Activated CD4-positive, alpha-beta memory T cell treated with anti-CD3 and anti-CD28 coated beads, Interleukin-2, amount 10 ng/mL, durations not matched to agents 7 days and 5 days (primary cell): ENCODE measurements at regions of chr11 and their contacts with region 1.

Region 1: DNA sequence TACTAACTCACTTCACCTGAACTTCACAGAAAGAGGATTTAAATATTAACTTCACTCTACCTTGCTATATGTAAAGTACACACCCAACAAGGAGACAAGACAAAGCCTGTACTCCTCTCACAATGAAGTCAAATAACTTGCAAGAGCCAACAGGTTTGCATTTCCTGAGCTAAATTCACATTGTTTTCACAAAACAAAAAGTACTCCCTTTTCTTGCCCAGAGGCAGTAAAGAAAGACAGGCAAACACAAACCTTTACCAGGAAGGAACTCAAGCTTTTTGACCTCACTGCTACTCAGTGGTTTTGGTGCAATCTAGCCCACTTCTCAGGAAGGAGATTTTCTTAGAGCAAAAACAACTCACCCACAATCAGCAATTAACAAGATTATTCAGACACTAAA is 15.7 kb downstream of the USP28 start:
- DNase-seq: no peak
- H3K4me3 Mint-ChIP-seq: no peak overlapping the region
- H3K27ac Mint-ChIP-seq: peak overlapping the region; percentile 90
- H3K4me1 Mint-ChIP-seq: peaks cover 34% of the 10 kb centered on the region
- H3K27me3 Mint-ChIP-seq: no peaks in the 10 kb centered on the region

Region 2: GRCh38 chr11:113875234-113876073 is 15.8 kb after region 1 on chr11 and contains the start of gene USP28:
- CTCF ChIA-PET with region 1: interaction called, 6 read pairs
- POLR2A ChIA-PET with region 1: interaction called, 25 read pairs
- DNase-seq: peak; percentile 86
- H3K4me3 Mint-ChIP-seq: peak within 1 kb of the TSS; percentile 95
- H3K27ac Mint-ChIP-seq: peak within 1 kb of the TSS; percentile 91
- H3K4me1 Mint-ChIP-seq: peaks cover 49% of the 10 kb centered on the region
- H3K27me3 Mint-ChIP-seq: peaks cover 1% of the 10 kb centered on the region
- total RNA-seq, gene USP28: 52.3 to 53.8 TPM